ENCODE measurements at regions of chr1 and their contacts with region 1.

Region 1: GRCh38 chr1:170967042-170967910 is 31.9 kb downstream of the MROH9 start:
- DNase-seq: no peak
- ATAC-seq: peak; percentile 86
- H3K4me3 Mint-ChIP-seq: no peak overlapping the region
- H3K27ac Mint-ChIP-seq: no peak overlapping the region
- H3K4me1 Mint-ChIP-seq: no peaks in the 10 kb centered on the region
- H3K27me3 Mint-ChIP-seq: no peaks in the 10 kb centered on the region
- CTCF ChIP-seq: peak; percentile 27; the same call in 1 of the 2 replicates

Region 2: GRCh38 chr1:170985406-170985805 is 18.1 kb after region 1 on chr1:
- CTCF ChIA-PET with region 1: interaction called, 11 read pairs
- POLR2A ChIA-PET with region 1: no interaction called
- DNase-seq: no peak
- ATAC-seq: no peak
- H3K4me3 Mint-ChIP-seq: no peak overlapping the region
- H3K27ac Mint-ChIP-seq: no peak overlapping the region
- H3K4me1 Mint-ChIP-seq: no peaks in the 10 kb centered on the region
- H3K27me3 Mint-ChIP-seq: no peaks in the 10 kb centered on the region
- CTCF ChIP-seq: no peak

Region 3: DNA sequence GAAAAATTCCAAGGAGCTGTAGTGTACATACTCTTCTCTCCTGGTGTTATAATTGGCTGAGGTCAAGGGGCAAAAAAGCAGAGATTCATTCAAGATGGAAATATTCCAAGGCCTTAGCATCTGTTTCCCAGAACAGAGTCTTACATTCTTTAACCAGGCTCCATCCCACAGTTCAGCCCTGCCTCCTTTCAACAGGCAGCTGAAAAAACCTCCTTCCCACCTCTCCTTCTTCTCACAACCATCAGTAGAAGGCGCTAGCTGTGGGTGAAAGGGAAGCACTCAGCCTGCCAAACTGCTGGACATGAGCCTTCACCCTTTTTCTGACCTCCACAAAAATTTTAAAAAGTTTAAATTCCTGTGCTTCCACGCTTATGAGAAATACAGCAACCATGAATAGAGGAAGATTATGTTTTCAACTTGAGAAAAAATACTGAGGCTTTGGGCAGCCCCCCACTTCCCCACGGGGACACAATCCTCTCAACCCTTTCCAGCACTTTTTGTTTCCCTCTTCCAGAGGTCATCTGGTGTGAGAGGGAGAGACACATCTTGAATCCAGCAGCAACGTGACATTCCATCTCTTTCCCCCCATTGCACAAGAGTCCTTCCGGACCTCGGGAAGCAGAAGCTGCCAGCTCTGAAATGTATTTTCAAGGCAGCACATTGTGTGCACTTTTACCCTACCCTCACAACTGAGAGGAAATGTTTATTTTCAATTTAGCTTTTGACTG is 174.6 kb after region 1 on chr1:
- CTCF ChIA-PET with region 1: interaction called, 10 read pairs
- POLR2A ChIA-PET with region 1: no interaction called
- DNase-seq: no peak
- ATAC-seq: peak; percentile 87
- H3K4me3 Mint-ChIP-seq: no peak overlapping the region
- H3K27ac Mint-ChIP-seq: peak overlapping the region; percentile 50
- H3K4me1 Mint-ChIP-seq: peaks cover 34% of the 10 kb centered on the region
- H3K27me3 Mint-ChIP-seq: no peaks in the 10 kb centered on the region
- CTCF ChIP-seq: no peak

Region 4: DNA sequence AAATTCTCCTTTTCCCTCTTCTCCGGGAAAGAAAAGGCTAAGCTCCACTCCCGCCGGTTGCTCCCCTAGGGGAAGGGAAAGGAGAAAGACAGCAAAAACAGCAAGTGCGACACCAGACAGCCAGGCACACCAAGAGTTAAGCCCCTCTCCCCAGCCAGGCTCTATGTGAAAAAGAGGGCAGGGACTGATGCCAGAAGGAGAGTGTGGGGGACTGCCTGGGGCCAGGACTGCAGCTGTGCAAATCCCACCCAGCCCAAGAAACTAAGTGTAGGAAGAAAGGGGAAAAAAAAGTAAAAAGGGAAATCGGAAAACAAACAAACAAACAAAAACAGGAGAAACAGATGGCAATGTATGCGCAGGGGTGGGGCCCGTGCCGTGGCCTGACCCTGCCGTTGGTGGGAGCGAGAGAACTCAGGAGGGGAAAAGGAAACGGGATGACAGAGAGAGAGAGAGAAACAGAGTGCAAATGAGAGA is 253.3 kb after region 1 on chr1:
- CTCF ChIA-PET with region 1: interaction called, 59 read pairs
- POLR2A ChIA-PET with region 1: no interaction called
- DNase-seq: peak; percentile 69
- ATAC-seq: peak; percentile 91
- H3K4me3 Mint-ChIP-seq: peak overlapping the region; percentile 73
- H3K27ac Mint-ChIP-seq: peak overlapping the region; percentile 99
- H3K4me1 Mint-ChIP-seq: peaks cover 62% of the 10 kb centered on the region
- H3K27me3 Mint-ChIP-seq: no peaks in the 10 kb centered on the region; the same call in 1 of the 2 replicates
- CTCF ChIP-seq: no peak

Region 5: DNA sequence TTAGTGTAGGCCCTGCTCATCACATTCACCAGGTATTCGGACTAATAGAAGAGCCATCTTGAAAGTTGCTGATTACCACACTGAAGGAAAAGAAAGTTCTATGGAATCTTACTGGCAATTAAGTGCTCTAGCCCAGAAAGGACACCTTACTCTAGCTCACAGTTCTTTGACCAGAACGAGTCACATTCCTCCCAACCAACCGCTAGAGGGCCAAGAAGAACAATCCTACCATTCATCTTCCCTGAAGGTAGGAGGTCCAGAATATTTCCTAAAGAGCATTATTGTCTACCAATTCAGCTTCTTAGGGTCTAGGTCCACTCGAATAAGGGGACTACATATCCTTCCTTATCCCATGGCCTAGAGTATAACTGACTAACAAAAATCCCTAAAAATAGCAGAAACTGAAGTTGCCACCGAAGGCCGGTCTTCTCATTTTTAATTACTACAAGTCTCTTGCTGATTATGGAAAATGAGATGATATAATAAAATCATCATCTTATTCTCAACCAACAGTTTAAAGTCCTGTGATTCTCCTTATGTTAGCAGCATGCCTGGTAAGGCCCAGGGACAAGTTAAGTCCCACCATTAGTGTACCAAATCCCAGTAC is 278.3 kb after region 1 on chr1:
- CTCF ChIA-PET with region 1: interaction called, 13 read pairs
- POLR2A ChIA-PET with region 1: no interaction called
- DNase-seq: peak; percentile 36
- ATAC-seq: peak; percentile 90
- H3K4me3 Mint-ChIP-seq: no peak overlapping the region
- H3K27ac Mint-ChIP-seq: no peak overlapping the region
- H3K4me1 Mint-ChIP-seq: peaks cover 18% of the 10 kb centered on the region
- H3K27me3 Mint-ChIP-seq: peaks cover 25% of the 10 kb centered on the region
- CTCF ChIP-seq: peak; percentile 40

Measured in WTC11 (cell line).